Endothelial cell of umbilical vein (primary cell): ENCODE measurements at regions of chr1 and their contacts with region 1.

Region 1: DNA sequence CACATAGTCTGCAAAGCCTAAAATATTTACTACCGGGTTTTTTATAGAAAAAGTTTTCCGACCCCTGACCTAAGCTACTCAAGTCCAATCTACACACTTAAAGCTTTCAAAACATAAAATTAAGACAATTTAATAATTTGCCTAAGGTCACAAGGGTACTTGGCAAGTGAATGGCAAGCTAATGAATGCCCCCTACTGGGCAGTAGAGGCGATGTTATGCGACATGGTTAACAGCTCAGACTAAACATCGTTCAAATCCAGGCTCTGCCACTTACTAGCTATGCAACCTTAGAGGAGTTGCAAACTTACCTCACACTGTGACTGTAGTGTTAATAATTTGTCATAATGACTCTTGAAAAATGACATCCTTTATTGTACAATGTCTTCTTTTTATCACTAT is 317.2 kb upstream of the NFIA start:
- DNase-seq: peak; percentile 49
- H3K4me3 ChIP-seq: no peak overlapping the region
- H3K27ac ChIP-seq: no peak overlapping the region
- H3K4me1 ChIP-seq: peaks cover 13% of the 10 kb centered on the region
- H3K27me3 ChIP-seq: no peaks in the 10 kb centered on the region
- CTCF ChIP-seq: peak; percentile 44 to 51
- POLR2A ChIP-seq: no peak

Region 2: GRCh38 chr1:59971464-59971911 is 793.7 kb before region 1 on chr1:
- CTCF ChIA-PET with region 1: interaction called, 22 read pairs
- POLR2A ChIA-PET with region 1: no interaction called
- dilution Hi-C with region 1: no loop called
- intact Hi-C with region 1: no loop called
- DNase-seq: peak; percentile 63
- H3K4me3 ChIP-seq: no peak overlapping the region
- H3K27ac ChIP-seq: no peak overlapping the region
- H3K4me1 ChIP-seq: peaks cover 2% of the 10 kb centered on the region
- H3K27me3 ChIP-seq: peaks cover 0 to 11% of the 10 kb centered on the region in 2 experiments
- CTCF ChIP-seq: peak; percentile 83 to 91
- POLR2A ChIP-seq: no peak

Region 3: DNA sequence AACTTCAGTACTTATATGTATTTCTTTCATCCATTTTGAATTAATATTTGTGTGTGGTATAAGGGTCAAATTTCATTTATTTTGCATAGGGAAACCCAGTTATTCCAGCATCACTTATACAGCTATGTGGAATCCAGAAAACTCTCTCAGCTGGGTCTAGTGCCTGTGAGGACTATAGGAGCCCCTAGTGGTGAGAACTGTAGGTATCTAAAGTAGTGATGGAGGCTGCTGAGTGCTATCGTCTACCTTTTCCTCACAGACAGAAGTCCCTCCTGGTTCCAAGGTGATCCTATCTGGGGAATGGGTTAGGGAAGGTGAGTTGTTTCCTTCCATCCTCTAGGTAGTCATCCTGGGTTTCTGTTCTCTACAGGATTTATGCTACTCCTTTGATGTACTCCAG is 339.7 kb before region 1 on chr1:
- CTCF ChIA-PET with region 1: interaction called, 23 read pairs
- POLR2A ChIA-PET with region 1: no interaction called
- dilution Hi-C with region 1: no loop called
- intact Hi-C with region 1: no loop called
- DNase-seq: peak; percentile 13
- H3K4me3 ChIP-seq: no peak overlapping the region
- H3K27ac ChIP-seq: no peak overlapping the region
- H3K4me1 ChIP-seq: peaks cover 12% of the 10 kb centered on the region
- H3K27me3 ChIP-seq: no peaks in the 10 kb centered on the region
- CTCF ChIP-seq: peak; percentile 34 to 53
- POLR2A ChIP-seq: no peak

Region 4: DNA sequence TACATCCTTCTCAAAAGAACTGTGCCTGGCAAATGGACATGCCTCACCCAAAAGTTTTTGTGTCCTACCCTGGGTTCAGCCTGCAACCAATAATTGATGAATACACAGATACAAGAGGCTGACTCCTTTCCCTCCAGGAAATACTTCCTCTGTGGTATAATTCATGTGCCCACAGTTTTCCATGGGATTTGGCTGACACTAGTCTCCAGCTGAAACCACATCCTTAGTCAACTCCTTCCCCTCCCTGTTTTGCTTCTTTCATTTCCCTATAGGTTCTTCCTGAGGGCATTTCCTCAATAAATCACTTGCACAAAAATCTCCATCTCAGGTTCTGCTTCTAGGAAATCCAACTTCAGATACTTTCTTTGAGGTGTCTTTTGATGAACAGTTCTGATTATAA is 255.0 kb before region 1 on chr1:
- CTCF ChIA-PET with region 1: interaction called, 4 read pairs
- POLR2A ChIA-PET with region 1: no interaction called
- dilution Hi-C with region 1: no loop called
- intact Hi-C with region 1: loop called (anchors 1 kb)
- DNase-seq: peak; percentile 89
- H3K4me3 ChIP-seq: no peak overlapping the region
- H3K27ac ChIP-seq: peak overlapping the region; percentile 13
- H3K4me1 ChIP-seq: peaks cover 28% of the 10 kb centered on the region
- H3K27me3 ChIP-seq: no peaks in the 10 kb centered on the region
- CTCF ChIP-seq: no peak
- POLR2A ChIP-seq: peak; percentile 79

Region 5: DNA sequence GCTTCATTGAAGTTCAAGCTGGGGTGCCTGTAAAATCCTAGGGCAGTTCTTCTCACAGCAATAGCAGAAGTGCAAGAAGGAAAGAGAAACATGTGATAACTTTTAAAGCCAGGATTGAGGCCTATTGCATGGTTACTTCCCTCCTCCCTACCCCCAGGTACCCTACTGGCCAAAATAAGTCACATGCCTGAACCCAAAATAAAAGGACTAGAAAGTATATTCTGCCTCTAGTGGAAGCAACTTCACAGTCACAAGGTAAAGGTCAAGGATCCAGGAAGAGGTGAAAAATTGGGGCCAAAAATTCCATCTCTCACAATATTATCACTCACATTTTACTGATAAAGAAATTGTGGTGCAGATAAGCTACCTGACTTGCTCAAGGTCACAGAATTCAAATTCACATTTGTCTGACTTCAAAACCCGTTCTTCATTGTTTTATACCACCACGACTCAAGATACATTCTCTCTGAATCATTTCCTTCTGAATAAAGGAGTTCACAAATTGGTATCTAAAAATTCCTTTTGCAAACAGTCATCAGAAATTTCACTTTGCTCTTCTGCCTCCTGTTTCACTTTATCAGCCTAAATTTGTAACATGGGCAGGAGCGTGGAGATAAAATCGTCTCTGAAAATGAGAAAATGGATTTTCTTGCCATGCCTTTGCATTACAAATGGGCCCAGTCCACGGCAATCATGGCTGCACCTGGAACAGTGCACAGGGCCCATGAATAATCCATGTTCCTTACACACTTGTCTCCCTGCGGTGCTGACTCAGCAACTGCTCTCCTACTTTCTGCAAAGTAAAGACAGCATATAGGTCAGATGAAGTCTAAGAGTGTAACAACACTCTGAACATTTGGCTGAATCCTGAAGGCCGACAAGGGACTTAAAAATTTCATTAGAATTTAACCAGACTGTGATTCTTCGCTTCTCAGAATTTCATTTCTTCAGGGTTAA is 168.1 kb before region 1 on chr1:
- CTCF ChIA-PET with region 1: interaction called, 7 read pairs
- POLR2A ChIA-PET with region 1: no interaction called
- dilution Hi-C with region 1: no loop called
- intact Hi-C with region 1: loop called (anchors 5 kb)
- DNase-seq: peak; percentile 57
- H3K4me3 ChIP-seq: no peak overlapping the region
- H3K27ac ChIP-seq: peak overlapping the region; percentile 61
- H3K4me1 ChIP-seq: peaks cover 22% of the 10 kb centered on the region
- H3K27me3 ChIP-seq: no peaks in the 10 kb centered on the region
- CTCF ChIP-seq: peak in 1 of 2 donors; percentile 3
- POLR2A ChIP-seq: no peak

Region 6: GRCh38 chr1:60751306-60751705 is 13.9 kb before region 1 on chr1:
- CTCF ChIA-PET with region 1: interaction called, 17 read pairs
- POLR2A ChIA-PET with region 1: no interaction called
- dilution Hi-C with region 1: no loop called
- intact Hi-C with region 1: no loop called
- DNase-seq: no peak
- H3K4me3 ChIP-seq: no peak overlapping the region
- H3K27ac ChIP-seq: no peak overlapping the region
- H3K4me1 ChIP-seq: no peaks in the 10 kb centered on the region
- H3K27me3 ChIP-seq: no peaks in the 10 kb centered on the region
- CTCF ChIP-seq: no peak
- POLR2A ChIP-seq: no peak

Region 7: GRCh38 chr1:60950224-60951063 is 185.2 kb after region 1 on chr1:
- CTCF ChIA-PET with region 1: no interaction called
- POLR2A ChIA-PET with region 1: no interaction called
- dilution Hi-C with region 1: no loop called
- intact Hi-C with region 1: loop called (anchors 10 kb)
- DNase-seq: no peak
- H3K4me3 ChIP-seq: no peak overlapping the region
- H3K27ac ChIP-seq: no peak overlapping the region
- H3K4me1 ChIP-seq: peaks cover 29% of the 10 kb centered on the region
- H3K27me3 ChIP-seq: no peaks in the 10 kb centered on the region
- CTCF ChIP-seq: no peak
- POLR2A ChIP-seq: no peak